ENCODE measurements at regions of chr22 and their contacts with region 1.

Region 1: DNA sequence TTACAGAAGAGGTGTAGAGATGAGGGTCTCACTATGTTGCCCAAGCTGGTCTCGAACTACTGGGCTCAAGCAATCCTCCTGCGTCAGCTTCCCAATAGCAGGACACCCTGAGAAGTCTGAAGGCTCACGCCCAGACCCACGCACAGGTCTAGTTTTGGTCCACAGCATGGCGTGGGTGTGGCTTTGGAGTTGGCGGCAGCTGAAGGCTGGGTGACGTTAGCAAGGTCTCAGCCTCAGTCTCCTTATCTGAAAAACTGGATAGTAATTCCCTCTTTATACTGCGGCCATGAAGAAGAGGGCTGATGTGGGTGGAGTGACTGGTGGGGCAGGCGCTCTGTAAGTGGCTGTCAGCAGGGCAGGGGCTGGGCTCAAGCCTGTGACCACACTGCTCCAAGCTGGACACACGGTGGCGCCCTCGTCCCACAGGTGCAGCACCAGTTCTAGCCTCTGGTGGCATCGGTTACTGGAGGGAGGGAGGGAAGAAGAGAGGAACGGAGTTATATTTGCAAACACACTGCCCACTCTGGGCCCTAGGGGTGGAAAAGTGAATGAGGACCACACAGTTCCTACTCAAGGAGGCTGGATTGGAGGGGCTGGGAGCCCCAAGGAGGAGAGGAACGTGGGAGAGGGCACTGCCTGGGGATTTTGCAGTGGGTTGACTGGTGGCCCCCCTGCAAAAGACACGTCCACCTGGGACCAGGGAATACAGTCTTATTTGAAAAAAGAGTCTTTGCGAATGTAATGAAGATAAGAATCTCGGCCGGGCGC is 19.6 kb upstream of the CARD10 start:
- DNase-seq: peak; percentile 85 to 86 (median 86)
- H3K4me3 ChIP-seq: no peak overlapping the region
- H3K4me3 Mint-ChIP-seq: peak overlapping the region in 7 of 8 donors; percentile 14 to 88 (median 47)
- H3K27ac ChIP-seq: no peak overlapping the region
- H3K27ac Mint-ChIP-seq: peak overlapping the region in 5 of 7 donors; percentile 1 to 71 (median 38)
- H3K4me1 ChIP-seq: peaks cover 30% of the 10 kb centered on the region
- H3K4me1 Mint-ChIP-seq: peaks cover 14 to 40% (median 25%) of the 10 kb centered on the region in 4 donors
- H3K27me3 ChIP-seq: no peaks in the 10 kb centered on the region
- H3K27me3 Mint-ChIP-seq: peaks cover 14 to 18% of the 10 kb centered on the region in 2 donors

Region 2: DNA sequence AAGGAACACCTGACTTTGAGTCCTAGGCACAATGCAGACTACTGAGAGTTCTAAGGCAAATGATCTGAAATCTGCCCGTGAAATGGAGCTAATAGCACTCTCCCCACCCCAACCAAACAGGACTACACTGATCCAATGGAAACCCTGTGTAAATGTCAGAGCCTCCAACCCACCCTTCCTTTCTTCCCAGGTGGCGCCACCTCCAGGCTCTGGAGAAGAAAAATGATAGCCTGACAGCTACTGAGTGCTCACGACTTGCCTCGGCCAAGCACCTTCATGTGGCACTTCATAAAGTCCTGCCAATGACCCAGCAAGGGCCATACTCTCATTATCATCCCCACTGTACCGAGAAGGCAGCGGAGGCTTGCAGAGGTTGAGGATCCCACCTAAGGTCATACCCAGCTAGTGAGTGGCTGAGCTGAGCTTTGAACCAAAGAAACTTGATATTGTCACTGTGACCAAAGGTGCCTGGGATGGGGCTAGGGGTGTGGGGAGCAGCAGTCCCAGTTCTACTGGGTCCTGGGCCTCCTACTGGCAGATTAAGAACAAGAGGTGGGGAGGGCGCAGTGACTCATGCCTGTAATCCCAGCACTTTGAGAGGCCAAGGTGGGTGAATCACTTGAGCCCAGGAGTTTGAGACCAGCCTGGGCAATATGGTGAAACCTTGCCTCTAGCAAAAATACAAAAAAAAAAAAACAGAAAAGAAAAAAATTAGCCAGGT is 540.0 kb before region 1 on chr22:
- CTCF ChIA-PET with region 1: no interaction called
- POLR2A ChIA-PET with region 1: no interaction called
- intact Hi-C with region 1: no loop called
- DNase-seq: no peak
- H3K4me3 ChIP-seq: no peak overlapping the region
- H3K4me3 Mint-ChIP-seq: no peak overlapping the region
- H3K27ac ChIP-seq: no peak overlapping the region
- H3K27ac Mint-ChIP-seq: peak overlapping the region in 1 of 7 donors; percentile 43
- H3K4me1 ChIP-seq: no peaks in the 10 kb centered on the region
- H3K4me1 Mint-ChIP-seq: no peaks in the 10 kb centered on the region
- H3K27me3 ChIP-seq: no peaks in the 10 kb centered on the region
- H3K27me3 Mint-ChIP-seq: peaks cover 5 to 17% of the 10 kb centered on the region in 2 donors

Region 3: GRCh38 chr22:37353839-37354238 is 184.9 kb before region 1 on chr22:
- CTCF ChIA-PET with region 1: no interaction called
- POLR2A ChIA-PET with region 1: no interaction called
- intact Hi-C with region 1: no loop called
- DNase-seq: no peak
- H3K4me3 ChIP-seq: no peak overlapping the region
- H3K4me3 Mint-ChIP-seq: no peak overlapping the region
- H3K27ac ChIP-seq: no peak overlapping the region
- H3K27ac Mint-ChIP-seq: no peak overlapping the region
- H3K4me1 ChIP-seq: no peaks in the 10 kb centered on the region
- H3K4me1 Mint-ChIP-seq: no peaks in the 10 kb centered on the region
- H3K27me3 ChIP-seq: no peaks in the 10 kb centered on the region
- H3K27me3 Mint-ChIP-seq: peaks cover 5% of the 10 kb centered on the region in 2 donors

Region 4: DNA sequence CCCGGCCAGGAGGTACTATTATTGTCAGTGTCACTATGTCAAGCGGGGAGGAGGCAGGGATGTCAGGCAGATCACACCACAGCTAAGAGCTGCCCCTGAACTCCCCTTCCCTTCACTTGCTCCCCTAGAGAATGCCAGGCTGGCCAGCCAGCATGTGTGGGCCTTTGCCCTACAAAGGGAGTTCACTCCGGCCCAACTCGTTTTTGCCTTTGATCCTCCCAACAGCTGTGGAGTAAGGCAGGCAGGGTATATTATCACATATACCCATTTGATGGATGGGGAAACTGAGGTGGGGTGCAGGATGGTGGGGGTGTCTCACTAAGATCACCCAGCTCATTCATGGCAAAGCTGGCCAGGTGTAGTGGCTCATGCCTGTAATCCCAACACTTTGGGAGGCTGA is 10.1 kb after region 1 on chr22:
- CTCF ChIA-PET with region 1: interaction called, 10 read pairs
- POLR2A ChIA-PET with region 1: no interaction called
- intact Hi-C with region 1: no loop called
- DNase-seq: no peak
- H3K4me3 ChIP-seq: no peak overlapping the region
- H3K4me3 Mint-ChIP-seq: no peak overlapping the region
- H3K27ac ChIP-seq: no peak overlapping the region
- H3K27ac Mint-ChIP-seq: no peak overlapping the region
- H3K4me1 ChIP-seq: peaks cover 11% of the 10 kb centered on the region
- H3K4me1 Mint-ChIP-seq: peaks cover 2 to 8% (median 6%) of the 10 kb centered on the region in 4 donors
- H3K27me3 ChIP-seq: no peaks in the 10 kb centered on the region
- H3K27me3 Mint-ChIP-seq: peaks cover 4 to 10% of the 10 kb centered on the region in 2 donors

Region 5: DNA sequence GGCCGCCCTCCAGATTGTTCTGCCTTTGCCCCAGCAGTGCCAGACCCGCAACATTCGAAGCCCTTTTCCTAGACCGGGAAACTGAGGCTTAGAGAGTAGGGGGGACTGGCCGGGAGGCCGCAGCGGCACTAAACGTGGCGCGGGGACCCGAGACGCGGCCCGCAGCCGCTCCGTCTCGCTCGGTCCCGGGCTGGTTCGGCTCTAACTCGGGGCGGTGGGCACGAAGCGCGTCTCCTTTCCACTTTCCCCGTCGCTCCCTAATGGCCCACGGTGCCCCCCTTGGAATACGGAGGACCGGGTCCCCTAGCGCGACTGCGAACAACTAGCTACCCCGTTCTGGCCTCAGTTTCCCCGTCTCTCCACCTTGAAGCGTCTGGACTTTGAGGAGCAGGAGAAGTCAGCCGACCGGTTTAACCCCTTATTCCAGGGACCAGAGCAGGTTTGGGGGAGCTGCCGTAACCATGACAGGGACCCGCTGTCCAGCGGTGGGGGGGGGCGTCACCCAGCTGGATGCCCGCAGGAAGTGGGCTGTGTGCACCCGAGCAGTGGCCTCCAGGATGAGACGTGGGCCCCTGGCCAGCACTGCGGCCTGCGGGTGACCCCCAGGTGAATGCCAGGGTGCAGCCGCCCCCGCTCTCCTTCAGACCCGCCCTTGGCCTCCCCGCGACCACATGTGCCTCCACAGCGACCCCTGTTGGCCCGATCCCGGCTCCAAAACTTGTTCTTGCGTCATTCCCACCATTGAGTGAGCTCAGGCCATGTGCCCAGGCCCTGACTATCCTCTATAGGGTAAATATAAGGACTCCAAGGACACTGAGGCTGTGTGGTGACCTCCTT is 22.7 kb after region 1 on chr22:
- CTCF ChIA-PET with region 1: interaction called, 523 read pairs
- POLR2A ChIA-PET with region 1: interaction called, 60 read pairs
- intact Hi-C with region 1: loop called (anchors 1 kb)
- DNase-seq: peak; percentile 59 to 70 (median 68)
- H3K4me3 ChIP-seq: peak overlapping the region in 1 of 2 donors; percentile 27
- H3K4me3 Mint-ChIP-seq: peak overlapping the region; percentile 20 to 91 (median 68)
- H3K27ac ChIP-seq: no peak overlapping the region
- H3K27ac Mint-ChIP-seq: peak overlapping the region in 2 of 7 donors; percentile 47 to 58
- H3K4me1 ChIP-seq: peaks cover 25% of the 10 kb centered on the region
- H3K4me1 Mint-ChIP-seq: peaks cover 7 to 41% (median 20%) of the 10 kb centered on the region in 4 donors
- H3K27me3 ChIP-seq: peaks cover 28% of the 10 kb centered on the region
- H3K27me3 Mint-ChIP-seq: peaks cover 23 to 39% of the 10 kb centered on the region in 2 donors

Region 6: DNA sequence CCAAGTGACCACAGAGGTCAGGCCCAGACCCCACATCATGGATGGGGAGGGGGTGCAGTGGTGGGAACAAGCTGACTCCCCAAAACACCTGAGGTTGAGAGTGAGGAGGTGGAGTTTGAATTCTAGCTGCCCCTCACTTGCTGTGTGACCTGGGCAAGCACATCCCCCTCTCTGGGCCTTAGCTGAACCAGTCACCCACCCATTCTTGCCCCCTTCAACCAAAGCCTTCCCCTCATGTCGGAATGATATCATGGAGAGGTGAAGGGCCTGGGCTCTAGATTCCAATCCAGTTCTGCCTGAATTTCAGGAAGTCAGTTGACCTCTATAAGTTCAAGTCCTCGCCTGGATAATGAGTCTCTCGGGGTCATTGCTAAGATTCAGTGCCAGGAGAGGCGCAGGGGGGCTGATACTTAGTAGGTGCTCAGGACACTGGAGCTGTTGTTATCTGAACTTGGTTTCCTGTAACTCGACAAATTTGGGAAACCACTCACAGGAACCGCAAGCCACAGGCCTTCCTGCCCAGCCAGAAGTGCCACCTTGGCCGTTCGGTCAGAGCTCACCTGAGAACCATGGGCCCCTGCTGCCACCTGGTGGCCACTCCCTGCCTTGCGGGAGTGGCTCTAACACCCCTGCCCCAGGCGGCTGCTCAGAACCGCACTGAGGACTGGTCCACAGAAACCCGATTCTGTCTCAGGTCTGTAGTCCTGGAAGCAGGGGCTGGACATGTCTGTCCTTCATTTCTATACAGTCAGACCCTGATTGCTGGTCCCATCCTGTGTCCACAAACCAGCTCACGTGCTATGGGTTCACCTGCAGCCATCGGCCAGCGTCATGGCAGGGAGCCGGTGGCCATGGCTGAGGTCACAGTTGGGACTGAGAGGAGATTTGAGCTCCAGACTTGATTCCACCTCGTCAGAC is 28.4 kb after region 1 on chr22:
- CTCF ChIA-PET with region 1: interaction called, 523 read pairs
- POLR2A ChIA-PET with region 1: interaction called, 60 read pairs
- intact Hi-C with region 1: loop called (anchors 1 kb)
- DNase-seq: peak; percentile 87 to 91 (median 89)
- H3K4me3 ChIP-seq: peak overlapping the region; percentile 6 to 15
- H3K4me3 Mint-ChIP-seq: peak overlapping the region; percentile 58 to 85 (median 70)
- H3K27ac ChIP-seq: no peak overlapping the region
- H3K27ac Mint-ChIP-seq: peak overlapping the region; percentile 8 to 81 (median 57)
- H3K4me1 ChIP-seq: peaks cover 23% of the 10 kb centered on the region
- H3K4me1 Mint-ChIP-seq: peaks cover 11 to 36% (median 25%) of the 10 kb centered on the region in 4 donors
- H3K27me3 ChIP-seq: peaks cover 11% of the 10 kb centered on the region
- H3K27me3 Mint-ChIP-seq: peaks cover 14 to 24% of the 10 kb centered on the region in 2 donors

Region 7: GRCh38 chr22:37588546-37589215 is 49.9 kb after region 1 on chr22:
- CTCF ChIA-PET with region 1: interaction called, 72 read pairs
- POLR2A ChIA-PET with region 1: interaction called, 20 read pairs
- intact Hi-C with region 1: loop called (anchors 1 kb)
- DNase-seq: no peak
- H3K4me3 ChIP-seq: no peak overlapping the region
- H3K4me3 Mint-ChIP-seq: no peak overlapping the region
- H3K27ac ChIP-seq: no peak overlapping the region
- H3K27ac Mint-ChIP-seq: peak overlapping the region in 1 of 7 donors; percentile 55
- H3K4me1 ChIP-seq: peaks cover 6% of the 10 kb centered on the region
- H3K4me1 Mint-ChIP-seq: peaks cover 9 to 14% (median 11%) of the 10 kb centered on the region in 4 donors
- H3K27me3 ChIP-seq: no peaks in the 10 kb centered on the region
- H3K27me3 Mint-ChIP-seq: peaks cover 11 to 12% of the 10 kb centered on the region in 2 donors

Region 8: DNA sequence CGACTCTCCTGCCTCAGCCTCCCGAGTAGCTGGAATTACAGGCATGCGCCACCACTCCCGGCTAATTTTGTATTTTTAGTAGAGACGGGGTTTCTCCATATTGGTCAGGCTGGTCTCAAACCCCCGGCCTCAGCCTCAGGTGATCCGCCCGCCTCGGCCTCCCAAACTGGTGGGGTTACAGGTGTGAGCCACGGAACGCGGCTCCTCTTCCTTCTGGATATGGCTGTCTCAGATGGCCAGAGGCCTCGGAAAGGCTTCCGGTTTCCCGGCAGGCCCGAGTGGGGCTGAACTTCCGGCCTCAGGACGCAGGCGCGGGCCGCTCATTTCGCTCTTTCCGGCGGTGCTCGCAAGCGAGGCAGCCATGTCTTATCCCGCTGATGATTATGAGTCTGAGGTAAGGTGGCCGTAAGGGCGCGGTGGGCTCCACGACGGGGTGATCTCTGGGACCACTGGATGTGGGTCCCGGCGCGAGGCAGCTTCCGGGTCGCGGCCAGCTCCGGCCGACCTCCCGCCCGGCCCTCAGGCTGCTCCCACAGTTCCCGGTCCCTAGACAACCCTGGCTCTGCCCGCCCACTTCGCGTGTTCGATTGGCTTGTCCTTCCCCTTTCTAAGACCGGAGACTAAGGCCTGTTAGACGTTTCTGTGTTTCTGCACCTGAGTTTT is 310.4 kb after region 1 on chr22 and contains the start of gene EIF3L:
- CTCF ChIA-PET with region 1: no interaction called
- POLR2A ChIA-PET with region 1: no interaction called
- intact Hi-C with region 1: no loop called
- DNase-seq: peak; percentile 81 to 88 (median 85)
- H3K4me3 ChIP-seq: peak within 1 kb of the TSS; percentile 61 to 94
- H3K4me3 Mint-ChIP-seq: peak within 1 kb of the TSS; percentile 83 to 98 (median 93)
- H3K27ac ChIP-seq: peak within 1 kb of the TSS; percentile 87
- H3K27ac Mint-ChIP-seq: peak within 1 kb of the TSS; percentile 91 to 99 (median 97)
- H3K4me1 ChIP-seq: peaks cover 29% of the 10 kb centered on the region
- H3K4me1 Mint-ChIP-seq: peaks cover 28 to 58% (median 43%) of the 10 kb centered on the region in 4 donors
- H3K27me3 ChIP-seq: no peaks in the 10 kb centered on the region
- H3K27me3 Mint-ChIP-seq: no peaks in the 10 kb centered on the region
- total RNA-seq, gene EIF3L: 550 to 571 TPM

Measured in CD4-positive, alpha-beta memory T cell (primary cell).